Right ventricle myocardium inferior (tissue), 1 donor: ENCODE measurements at regions of chr6 and their contacts with region 1.

Region 1: GRCh38 chr6:156686995-156687788 is 90.0 kb upstream of the ARID1B start:
- DNase-seq: peak; percentile 94
- ATAC-seq: peak; percentile 98

Region 2: GRCh38 chr6:155314092-155314772 is 1373.0 kb before region 1 on chr6 and contains the start of gene TFB1M:
- intact Hi-C with region 1: loop called (anchors 10 kb)
- DNase-seq: peak; percentile 99
- ATAC-seq: peak; percentile 99
- total RNA-seq, gene TFB1M: 17.9 TPM

Region 3: GRCh38 chr6:156658186-156658966 is 28.8 kb before region 1 on chr6:
- intact Hi-C with region 1: loop called (anchors 2 kb)
- DNase-seq: no peak
- ATAC-seq: no peak

Region 4: DNA sequence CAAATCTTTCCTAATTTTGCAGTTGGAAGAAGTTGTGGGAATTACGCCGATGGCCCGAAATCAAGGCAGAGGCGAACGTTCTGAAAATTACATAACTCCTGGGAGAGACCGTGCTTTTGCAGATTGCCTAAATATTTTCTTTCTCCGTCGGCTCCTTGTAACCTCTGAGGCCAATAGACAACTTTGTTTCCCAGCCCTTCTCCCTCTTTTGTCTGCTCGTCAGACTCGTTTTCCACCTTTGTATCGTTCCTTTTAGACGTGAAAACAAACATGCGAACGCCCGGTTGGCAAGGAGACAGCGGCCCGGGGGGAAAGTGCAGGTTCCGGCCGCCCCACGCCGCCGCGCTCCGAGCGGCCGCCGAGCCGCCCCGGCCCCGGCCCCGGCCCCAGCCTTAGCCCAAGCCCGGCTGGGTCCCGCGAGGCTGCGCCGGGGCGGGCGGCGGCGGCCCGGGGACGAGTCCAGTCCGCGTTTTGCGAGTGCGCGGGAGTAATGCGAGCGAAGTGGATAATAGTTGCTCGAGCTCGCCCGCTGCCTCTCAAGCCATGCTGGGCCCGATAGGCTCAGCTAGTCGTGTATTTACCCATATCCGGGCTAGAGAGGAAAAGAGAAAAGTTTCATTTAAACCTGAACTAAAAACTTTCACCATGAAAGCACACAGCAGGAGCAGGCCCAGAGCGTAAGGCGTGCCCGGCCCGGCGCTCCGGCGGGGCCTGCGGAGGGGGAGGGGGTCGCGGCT is 89.8 kb after region 1 on chr6 and contains the start of gene ARID1B:
- intact Hi-C with region 1: loop called (anchors 1 kb)
- DNase-seq: peak; percentile 93
- ATAC-seq: peak; percentile 75
- total RNA-seq, gene ARID1B: 46.4 TPM

Region 5: DNA sequence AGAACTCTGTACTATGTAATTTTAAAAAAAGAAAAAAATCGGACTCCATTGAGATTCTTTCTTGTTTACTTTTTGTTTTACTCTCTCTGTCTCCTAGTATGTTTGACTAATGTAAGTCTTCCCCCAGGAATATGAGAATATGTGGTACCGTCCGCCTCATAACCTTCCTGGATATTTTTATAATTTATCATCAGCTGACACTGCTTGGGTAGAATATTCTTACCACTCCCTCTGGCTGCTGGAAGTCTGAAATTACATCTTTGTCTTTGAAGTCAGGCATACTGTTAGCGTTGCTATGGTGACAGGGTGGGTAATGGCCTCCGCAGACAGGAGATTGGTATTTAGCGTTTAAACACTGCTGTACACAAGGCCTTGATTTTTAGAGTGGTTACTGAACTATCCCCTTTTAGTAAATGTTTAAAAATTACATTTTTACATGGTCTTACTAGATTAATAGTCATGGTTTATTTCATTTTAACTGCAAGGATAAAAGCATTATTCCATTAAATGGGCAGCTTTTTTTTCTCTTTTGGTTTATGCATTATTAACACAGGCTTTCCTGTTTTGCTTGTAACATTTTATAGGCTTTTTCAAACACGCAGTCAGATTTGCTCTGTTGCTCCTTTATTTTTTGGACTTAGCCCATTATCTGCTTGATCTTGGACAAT is 266.4 kb after region 1 on chr6:
- intact Hi-C with region 1: loop called (anchors 5 kb)
- DNase-seq: no peak
- ATAC-seq: peak; percentile 73